ENCODE measurements at regions of chr12 and their contacts with region 1.

Region 1: GRCh38 chr12:51341259-51342007 is 5.0 kb downstream of the CELA1 start:
- DNase-seq: peak; percentile 72 to 77 (median 75)
- H3K4me3 ChIP-seq: no peak overlapping the region
- H3K4me3 Mint-ChIP-seq: peak overlapping the region in 5 of 8 donors; percentile 39 to 77 (median 64)
- H3K27ac ChIP-seq: no peak overlapping the region
- H3K27ac Mint-ChIP-seq: peak overlapping the region in 6 of 7 donors; percentile 38 to 89 (median 68)
- H3K4me1 ChIP-seq: peaks cover 6% of the 10 kb centered on the region
- H3K4me1 Mint-ChIP-seq: peaks cover 6 to 9% (median 8%) of the 10 kb centered on the region in 4 donors
- H3K27me3 ChIP-seq: no peaks in the 10 kb centered on the region
- H3K27me3 Mint-ChIP-seq: no peaks in the 10 kb centered on the region

Region 2: GRCh38 chr12:50763639-50764285 is 577.7 kb before region 1 on chr12 and contains the start of gene ATF1:
- CTCF ChIA-PET with region 1: interaction called, 14 read pairs
- POLR2A ChIA-PET with region 1: interaction called, 3 read pairs
- intact Hi-C with region 1: no loop called
- DNase-seq: peak; percentile 89 to 91 (median 91)
- H3K4me3 ChIP-seq: peak within 1 kb of the TSS; percentile 67 to 69
- H3K4me3 Mint-ChIP-seq: peak within 1 kb of the TSS; percentile 85 to 99 (median 93)
- H3K27ac ChIP-seq: peak within 1 kb of the TSS; percentile 77
- H3K27ac Mint-ChIP-seq: peak within 1 kb of the TSS; percentile 91 to 97 (median 96)
- H3K4me1 ChIP-seq: peaks cover 27% of the 10 kb centered on the region
- H3K4me1 Mint-ChIP-seq: peaks cover 18 to 48% (median 29%) of the 10 kb centered on the region in 4 donors
- H3K27me3 ChIP-seq: no peaks in the 10 kb centered on the region
- H3K27me3 Mint-ChIP-seq: no peaks in the 10 kb centered on the region
- total RNA-seq, gene ATF1: 52.2 to 52.3 TPM

Region 3: DNA sequence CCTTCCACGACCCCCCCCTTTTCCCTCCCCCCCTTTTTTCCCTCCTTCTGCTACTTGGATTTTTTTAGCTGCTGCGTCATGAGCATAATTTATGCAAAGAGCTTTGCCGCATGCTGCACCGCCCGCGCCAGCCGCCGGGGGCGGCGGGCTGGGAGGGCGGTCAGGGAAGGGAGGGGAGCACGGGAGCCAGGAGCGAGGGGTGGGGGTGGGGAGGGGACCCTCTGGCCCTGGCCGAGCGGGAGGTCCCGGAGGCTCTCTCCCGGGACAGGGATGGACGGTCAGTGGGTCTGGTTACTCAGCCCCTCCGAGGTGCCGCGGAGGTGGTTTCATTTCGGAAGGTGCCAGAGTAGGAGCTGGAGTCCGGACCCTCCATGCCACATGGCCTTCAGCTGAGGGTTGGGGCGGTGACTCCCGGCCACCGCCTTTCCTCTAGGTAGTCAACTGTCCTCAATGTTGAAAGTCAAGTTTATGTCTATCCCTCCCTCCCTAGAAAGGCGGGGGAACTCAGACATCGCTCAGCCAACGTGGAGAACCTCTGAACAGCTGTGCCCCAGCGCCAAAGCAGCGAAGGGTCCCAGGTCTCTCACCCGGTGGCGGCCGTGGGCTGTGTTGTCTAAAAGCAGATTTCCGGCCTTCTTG is 123.3 kb before region 1 on chr12 and contains the start of gene POU6F1:
- CTCF ChIA-PET with region 1: interaction called, 14 read pairs
- POLR2A ChIA-PET with region 1: interaction called, 9 read pairs
- intact Hi-C with region 1: no loop called
- DNase-seq: peak; percentile 76 to 82 (median 80)
- H3K4me3 ChIP-seq: peak within 1 kb of the TSS; percentile 90 to 99
- H3K4me3 Mint-ChIP-seq: peak within 1 kb of the TSS; percentile 90 to 96 (median 94)
- H3K27ac ChIP-seq: peak within 1 kb of the TSS; percentile 91
- H3K27ac Mint-ChIP-seq: peak within 1 kb of the TSS; percentile 94 to 99 (median 97)
- H3K4me1 ChIP-seq: peaks cover 25% of the 10 kb centered on the region
- H3K4me1 Mint-ChIP-seq: peaks cover 19 to 39% (median 29%) of the 10 kb centered on the region in 4 donors
- H3K27me3 ChIP-seq: no peaks in the 10 kb centered on the region
- H3K27me3 Mint-ChIP-seq: no peaks in the 10 kb centered on the region
- total RNA-seq, gene POU6F1: 71.9 to 79.8 TPM

Region 4: DNA sequence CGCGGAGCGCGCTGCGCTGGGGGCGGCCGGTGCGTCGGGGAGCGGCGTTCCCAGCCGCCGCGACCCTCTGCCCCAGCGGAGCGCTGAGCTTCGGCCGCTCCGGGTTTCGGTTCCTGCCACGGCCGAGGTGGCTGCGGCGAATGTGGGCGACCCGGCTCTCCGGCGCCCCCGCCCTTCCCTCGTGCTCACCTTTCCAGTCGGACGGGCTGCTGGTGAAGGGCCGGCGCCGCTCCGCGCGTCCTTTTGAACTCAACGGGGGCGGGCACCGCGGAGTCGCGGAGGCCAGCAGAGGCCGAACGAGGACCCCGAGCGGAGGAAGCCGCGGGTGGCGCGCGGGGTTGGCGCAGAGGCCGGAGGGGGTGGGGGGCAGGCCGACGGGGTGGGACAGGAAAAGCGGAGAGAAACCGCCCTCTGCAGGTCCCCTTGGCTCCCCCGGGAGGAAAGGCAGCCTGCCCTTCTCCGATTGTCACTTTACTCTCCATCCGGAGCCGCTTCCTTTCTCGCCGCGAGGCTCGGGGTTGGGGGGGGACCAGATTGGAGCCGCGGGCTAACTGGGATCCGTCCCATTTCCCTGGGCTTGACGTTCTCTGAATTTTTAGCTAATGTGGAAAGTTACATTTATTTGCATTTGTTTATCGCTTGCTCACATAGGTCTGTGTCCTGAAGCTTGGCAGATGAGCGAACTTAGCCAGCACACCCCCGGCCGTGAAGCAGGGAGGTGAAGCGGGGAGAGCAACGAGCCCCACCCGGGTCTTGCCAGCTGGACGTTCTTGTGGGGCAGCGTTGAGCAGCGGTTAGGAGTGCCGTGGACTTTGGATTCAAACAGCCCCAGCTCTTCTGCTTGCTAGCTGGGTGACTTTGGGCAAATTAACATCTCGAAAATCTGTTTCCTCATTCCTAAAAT is 71.1 kb before region 1 on chr12 and contains the start of gene SMAGP:
- CTCF ChIA-PET with region 1: interaction called, 199 read pairs
- POLR2A ChIA-PET with region 1: interaction called, 60 read pairs
- intact Hi-C with region 1: loop called (anchors 1 kb)
- DNase-seq: peak; percentile 36 to 51 (median 38)
- H3K4me3 ChIP-seq: peak within 1 kb of the TSS; percentile 3 to 57
- H3K4me3 Mint-ChIP-seq: peak within 1 kb of the TSS; percentile 88 to 97 (median 96)
- H3K27ac ChIP-seq: peak within 1 kb of the TSS; percentile 2
- H3K27ac Mint-ChIP-seq: peak within 1 kb of the TSS; percentile 80 to 95 (median 90)
- H3K4me1 ChIP-seq: peaks cover 20% of the 10 kb centered on the region
- H3K4me1 Mint-ChIP-seq: peaks cover 19 to 38% (median 24%) of the 10 kb centered on the region in 4 donors
- H3K27me3 ChIP-seq: no peaks in the 10 kb centered on the region
- H3K27me3 Mint-ChIP-seq: no peaks in the 10 kb centered on the region
- total RNA-seq, gene SMAGP: 3.9 to 5.5 TPM

Region 5: DNA sequence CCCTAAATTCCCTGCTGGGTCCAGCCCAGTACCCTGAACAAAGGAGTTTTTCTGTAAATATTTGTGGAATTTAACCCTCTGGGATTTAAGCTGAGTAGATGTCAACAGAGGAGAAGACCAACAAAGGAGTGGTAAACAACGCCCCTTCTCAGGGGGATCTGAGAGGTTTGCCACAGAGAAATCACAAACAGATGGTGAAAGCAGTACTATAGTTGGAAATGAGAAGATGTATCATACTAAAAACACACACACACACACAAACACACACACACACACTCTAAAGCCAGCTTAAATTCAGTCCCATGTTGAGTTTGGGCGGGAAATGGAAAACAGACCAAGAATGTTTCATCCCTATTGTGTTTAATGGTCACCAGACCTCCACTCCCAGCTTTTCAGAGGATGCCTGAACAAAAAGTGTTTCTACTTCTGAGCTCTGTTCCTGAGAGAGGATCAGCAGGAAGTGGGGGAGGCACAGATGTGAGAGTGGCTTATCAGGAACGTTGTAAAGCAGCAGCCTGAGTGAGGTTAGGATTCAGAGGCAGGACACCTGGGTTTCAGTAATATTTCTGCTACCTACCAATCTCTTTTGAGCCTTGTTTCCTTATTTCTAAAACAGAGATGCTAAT is 20.6 kb before region 1 on chr12:
- CTCF ChIA-PET with region 1: interaction called, 191 read pairs
- POLR2A ChIA-PET with region 1: interaction called, 86 read pairs
- intact Hi-C with region 1: loop called (anchors 1 kb)
- DNase-seq: peak in 1 of 5 donors; percentile 29
- H3K4me3 ChIP-seq: peak overlapping the region; percentile 61 to 73
- H3K4me3 Mint-ChIP-seq: peak overlapping the region; percentile 82 to 99 (median 96)
- H3K27ac ChIP-seq: peak overlapping the region; percentile 94
- H3K27ac Mint-ChIP-seq: peak overlapping the region; percentile 95 to 98 (median 98)
- H3K4me1 ChIP-seq: peaks cover 78% of the 10 kb centered on the region
- H3K4me1 Mint-ChIP-seq: peaks cover 53 to 93% (median 72%) of the 10 kb centered on the region in 4 donors
- H3K27me3 ChIP-seq: no peaks in the 10 kb centered on the region
- H3K27me3 Mint-ChIP-seq: no peaks in the 10 kb centered on the region

Region 6: GRCh38 chr12:51368640-51369517 is 27.4 kb after region 1 on chr12:
- CTCF ChIA-PET with region 1: interaction called, 21 read pairs
- POLR2A ChIA-PET with region 1: interaction called, 5 read pairs
- intact Hi-C with region 1: no loop called
- DNase-seq: peak; percentile 94 to 98 (median 96)
- H3K4me3 ChIP-seq: peak overlapping the region; percentile 45 to 55
- H3K4me3 Mint-ChIP-seq: peak overlapping the region; percentile 63 to 92 (median 81)
- H3K27ac ChIP-seq: peak overlapping the region; percentile 54
- H3K27ac Mint-ChIP-seq: peak overlapping the region; percentile 96 to 99 (median 98)
- H3K4me1 ChIP-seq: peaks cover 33% of the 10 kb centered on the region
- H3K4me1 Mint-ChIP-seq: peaks cover 32 to 51% (median 40%) of the 10 kb centered on the region in 4 donors
- H3K27me3 ChIP-seq: no peaks in the 10 kb centered on the region
- H3K27me3 Mint-ChIP-seq: no peaks in the 10 kb centered on the region

Region 7: DNA sequence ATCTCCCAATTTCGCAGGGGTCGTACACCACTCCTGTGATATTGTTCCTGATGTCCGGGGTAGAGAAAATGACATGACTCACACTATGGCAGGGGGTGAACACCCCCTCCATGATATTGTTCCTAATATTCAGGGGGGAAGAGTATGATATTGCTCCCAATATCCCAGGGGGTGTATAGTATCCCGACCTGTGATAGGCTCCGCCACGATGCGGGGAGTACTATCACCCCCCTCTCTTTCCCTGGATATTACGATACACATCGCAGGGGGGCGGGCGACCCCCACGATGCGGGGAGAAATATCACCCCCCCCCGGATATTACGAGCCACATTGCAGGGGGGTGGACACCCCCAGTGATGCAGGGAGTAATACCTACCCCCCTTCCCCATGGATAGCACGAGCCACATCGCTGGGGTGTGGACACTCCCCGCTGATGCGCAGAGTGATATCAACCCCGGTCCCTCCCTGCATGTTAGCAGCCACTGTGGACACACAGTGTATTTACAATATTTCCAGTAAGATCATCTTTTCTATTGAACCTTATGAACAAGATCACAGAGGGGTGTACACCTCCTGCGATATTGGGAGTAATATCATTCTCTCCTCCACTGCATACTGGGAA is 755.7 kb after region 1 on chr12:
- CTCF ChIA-PET with region 1: no interaction called
- POLR2A ChIA-PET with region 1: no interaction called
- intact Hi-C with region 1: no loop called
- DNase-seq: no peak
- H3K4me3 ChIP-seq: no peak overlapping the region
- H3K4me3 Mint-ChIP-seq: no peak overlapping the region
- H3K27ac ChIP-seq: no peak overlapping the region
- H3K27ac Mint-ChIP-seq: peak overlapping the region in 1 of 7 donors; percentile 11
- H3K4me1 ChIP-seq: no peaks in the 10 kb centered on the region
- H3K4me1 Mint-ChIP-seq: no peaks in the 10 kb centered on the region
- H3K27me3 ChIP-seq: peaks cover 8% of the 10 kb centered on the region
- H3K27me3 Mint-ChIP-seq: peaks cover 42 to 53% of the 10 kb centered on the region in 2 donors

Region 8: DNA sequence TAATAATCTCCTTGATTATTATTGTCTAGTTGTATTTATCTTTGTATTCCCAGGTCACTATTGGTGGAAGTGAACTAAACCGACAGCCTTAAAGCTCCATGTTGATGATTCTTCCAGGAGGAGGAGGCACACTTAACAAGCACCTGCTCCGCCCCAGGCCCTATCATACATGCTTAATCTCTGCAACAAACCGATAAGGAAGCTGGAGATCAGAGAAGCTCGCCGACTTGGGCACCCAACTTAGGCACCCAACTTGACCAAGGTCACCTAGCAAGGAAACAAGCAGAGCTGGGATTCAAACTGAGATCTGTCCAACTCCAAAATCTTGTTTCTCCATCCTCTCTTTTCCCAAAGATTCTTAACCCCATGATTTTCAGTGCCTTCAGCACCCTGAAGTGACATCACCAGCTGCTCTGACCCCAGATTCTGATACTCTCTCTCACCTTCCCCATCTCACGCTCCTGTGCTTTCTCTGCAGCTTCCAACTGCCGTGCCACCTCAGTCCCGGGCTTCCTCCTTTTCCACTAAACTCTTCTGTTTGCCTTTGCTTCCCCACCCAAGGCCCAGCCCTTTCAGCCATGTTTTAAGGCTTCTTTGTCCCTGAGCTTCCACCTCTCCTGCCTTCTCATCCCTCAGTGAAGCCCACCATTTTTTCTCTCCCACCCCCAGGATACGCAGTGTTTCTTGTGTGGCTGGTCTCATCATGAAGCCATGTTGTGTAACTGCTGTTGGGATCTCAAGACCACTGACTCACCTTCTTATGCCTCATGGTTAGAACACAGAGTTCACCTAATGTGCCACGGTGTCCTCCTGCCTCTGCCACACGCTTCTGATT is 1600.8 kb after region 1 on chr12:
- CTCF ChIA-PET with region 1: no interaction called
- POLR2A ChIA-PET with region 1: no interaction called
- intact Hi-C with region 1: no loop called
- DNase-seq: no peak
- H3K4me3 ChIP-seq: no peak overlapping the region
- H3K4me3 Mint-ChIP-seq: no peak overlapping the region
- H3K27ac ChIP-seq: no peak overlapping the region
- H3K27ac Mint-ChIP-seq: no peak overlapping the region
- H3K4me1 ChIP-seq: no peaks in the 10 kb centered on the region
- H3K4me1 Mint-ChIP-seq: no peaks in the 10 kb centered on the region
- H3K27me3 ChIP-seq: no peaks in the 10 kb centered on the region
- H3K27me3 Mint-ChIP-seq: peaks cover 4 to 6% of the 10 kb centered on the region in 2 donors

Measured in CD4-positive, alpha-beta memory T cell (primary cell).